Activated CD8-positive, alpha-beta T cell treated with anti-CD3 and anti-CD28 coated beads, Interleukin-2, amount 10 ng/mL, durations not matched to agents 7 days and 5 days (primary cell): ENCODE measurements at regions of chr2 and their contacts with region 1.

Region 1: DNA sequence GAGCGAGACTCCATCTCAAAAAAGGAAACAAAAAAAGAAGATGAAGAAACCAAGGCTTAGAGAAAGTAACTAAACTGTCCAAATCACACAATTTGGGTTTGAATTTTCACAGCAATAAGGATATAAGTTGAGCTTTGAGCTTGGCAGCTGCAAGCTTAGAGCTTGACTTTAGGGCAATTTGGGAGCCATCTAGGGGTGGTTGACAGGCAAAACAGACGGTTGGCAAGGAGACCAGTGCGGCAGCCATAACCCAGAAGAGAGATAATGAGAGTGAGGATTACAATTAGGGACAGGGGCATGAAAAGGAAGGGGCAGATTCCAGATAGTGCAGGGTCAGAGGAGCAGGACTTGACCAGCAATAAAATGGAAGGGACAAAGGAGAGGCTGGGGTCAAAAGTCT is 382.2 kb upstream of the HNRNPA3 start:
- DNase-seq: peak; percentile 58
- ATAC-seq: peak; percentile 44
- H3K4me3 Mint-ChIP-seq: no peak overlapping the region
- H3K27ac Mint-ChIP-seq: peak overlapping the region; percentile 7
- H3K4me1 Mint-ChIP-seq: peaks cover 45% of the 10 kb centered on the region
- H3K27me3 Mint-ChIP-seq: no peaks in the 10 kb centered on the region

Region 2: GRCh38 chr2:176845694-176846093 is 15.3 kb after region 1 on chr2:
- CTCF ChIA-PET with region 1: interaction called, 59 read pairs
- POLR2A ChIA-PET with region 1: no interaction called
- DNase-seq: no peak
- ATAC-seq: no peak
- H3K4me3 Mint-ChIP-seq: no peak overlapping the region
- H3K27ac Mint-ChIP-seq: peak overlapping the region; percentile 70
- H3K4me1 Mint-ChIP-seq: peaks cover 35% of the 10 kb centered on the region
- H3K27me3 Mint-ChIP-seq: no peaks in the 10 kb centered on the region

Region 3: GRCh38 chr2:176852667-176853066 is 22.3 kb after region 1 on chr2:
- CTCF ChIA-PET with region 1: interaction called, 59 read pairs
- POLR2A ChIA-PET with region 1: interaction called, 3 read pairs
- DNase-seq: peak; percentile 81
- ATAC-seq: peak; percentile 98
- H3K4me3 Mint-ChIP-seq: peak overlapping the region; percentile 6
- H3K27ac Mint-ChIP-seq: peak overlapping the region; percentile 81
- H3K4me1 Mint-ChIP-seq: peaks cover 65% of the 10 kb centered on the region
- H3K27me3 Mint-ChIP-seq: no peaks in the 10 kb centered on the region